Activated CD4-positive, alpha-beta T cell treated with anti-CD3 and anti-CD28 coated beads for 36 hours (primary cell): ENCODE measurements at regions of chr12 and their contacts with region 1.

Region 1: DNA sequence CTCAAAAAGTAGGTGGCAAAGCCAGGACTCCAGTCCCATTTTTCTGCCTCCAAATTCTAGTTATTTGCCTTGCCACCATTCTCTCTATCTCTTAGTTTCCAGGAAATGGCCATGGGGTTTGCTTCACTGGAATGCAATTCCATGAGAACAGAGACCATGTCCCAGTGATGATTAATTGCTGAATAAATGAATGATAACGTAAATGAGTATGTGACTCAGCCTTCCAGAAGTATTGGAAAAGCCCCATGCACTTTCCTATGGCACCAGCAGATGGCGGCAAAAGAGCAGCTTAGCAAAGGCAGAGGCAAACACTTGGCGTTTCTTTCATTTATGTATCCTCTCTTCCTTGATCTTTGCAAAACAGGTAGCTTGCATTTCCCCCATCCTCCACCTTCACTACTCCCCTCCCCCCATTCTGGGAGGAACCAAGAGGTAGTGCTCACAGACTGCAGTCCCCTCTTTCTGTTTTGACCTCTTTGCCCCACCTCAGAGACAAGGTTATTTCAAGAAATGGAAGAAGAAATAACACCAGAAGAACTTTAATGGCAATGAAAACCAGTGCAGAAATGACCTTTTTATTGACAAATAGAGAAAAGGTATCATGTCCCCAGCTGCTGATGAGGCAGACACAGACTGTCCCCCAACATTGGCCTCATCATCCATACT is 21.3 kb downstream of the TBX3 start:
- DNase-seq: peak; percentile 84
- ATAC-seq: peak; percentile 42
- H3K4me3 Mint-ChIP-seq: no peak overlapping the region
- H3K27ac Mint-ChIP-seq: no peak overlapping the region
- H3K4me1 Mint-ChIP-seq: no peaks in the 10 kb centered on the region
- H3K27me3 Mint-ChIP-seq: peaks cover 40% of the 10 kb centered on the region

Region 2: DNA sequence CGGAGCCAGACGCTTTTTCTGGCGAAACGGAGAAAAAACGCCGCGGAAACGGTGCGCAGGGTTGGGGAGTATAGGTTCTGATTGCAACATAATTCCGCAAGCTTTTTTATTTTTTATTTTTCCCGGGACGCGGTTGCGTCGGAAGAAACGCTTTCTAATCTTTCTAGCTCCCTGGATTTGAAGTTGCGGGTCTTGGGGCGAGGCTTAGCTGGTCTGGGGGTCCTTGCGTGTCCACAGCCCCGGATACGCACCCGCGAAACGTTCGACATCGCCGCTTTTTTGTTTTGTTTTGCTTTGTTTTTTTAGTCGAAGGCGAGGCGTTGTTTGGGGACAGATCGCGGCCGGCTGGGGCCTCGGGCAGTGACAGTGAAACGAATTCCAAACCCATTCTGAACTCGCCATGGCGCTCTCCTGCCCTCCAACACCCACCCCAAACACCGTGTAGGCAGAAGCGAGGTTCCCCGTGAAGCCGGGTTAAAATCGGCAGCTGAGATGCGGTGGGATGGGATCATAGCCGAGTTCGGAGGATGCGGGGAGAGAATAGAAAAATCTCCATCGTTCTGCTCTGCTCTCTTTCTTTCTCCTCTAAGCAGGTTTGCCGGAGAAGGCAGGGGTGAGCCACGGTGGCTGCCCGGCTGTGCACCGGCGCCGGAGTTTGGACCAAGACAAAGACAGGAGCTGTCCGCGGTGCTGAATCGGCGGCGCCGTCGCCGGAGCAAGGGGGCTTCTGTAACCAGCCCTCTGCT is 1182.9 kb before region 1 on chr12:
- CTCF ChIA-PET with region 1: no interaction called
- POLR2A ChIA-PET with region 1: no interaction called
- intact Hi-C with region 1: loop called in 1 of 2 experiments (anchors 10 kb)
- DNase-seq: peak; percentile 70
- ATAC-seq: no peak
- H3K4me3 Mint-ChIP-seq: peak overlapping the region; percentile 12
- H3K27ac Mint-ChIP-seq: no peak overlapping the region
- H3K4me1 Mint-ChIP-seq: peaks cover 4% of the 10 kb centered on the region
- H3K27me3 Mint-ChIP-seq: peaks cover 69% of the 10 kb centered on the region

Region 3: DNA sequence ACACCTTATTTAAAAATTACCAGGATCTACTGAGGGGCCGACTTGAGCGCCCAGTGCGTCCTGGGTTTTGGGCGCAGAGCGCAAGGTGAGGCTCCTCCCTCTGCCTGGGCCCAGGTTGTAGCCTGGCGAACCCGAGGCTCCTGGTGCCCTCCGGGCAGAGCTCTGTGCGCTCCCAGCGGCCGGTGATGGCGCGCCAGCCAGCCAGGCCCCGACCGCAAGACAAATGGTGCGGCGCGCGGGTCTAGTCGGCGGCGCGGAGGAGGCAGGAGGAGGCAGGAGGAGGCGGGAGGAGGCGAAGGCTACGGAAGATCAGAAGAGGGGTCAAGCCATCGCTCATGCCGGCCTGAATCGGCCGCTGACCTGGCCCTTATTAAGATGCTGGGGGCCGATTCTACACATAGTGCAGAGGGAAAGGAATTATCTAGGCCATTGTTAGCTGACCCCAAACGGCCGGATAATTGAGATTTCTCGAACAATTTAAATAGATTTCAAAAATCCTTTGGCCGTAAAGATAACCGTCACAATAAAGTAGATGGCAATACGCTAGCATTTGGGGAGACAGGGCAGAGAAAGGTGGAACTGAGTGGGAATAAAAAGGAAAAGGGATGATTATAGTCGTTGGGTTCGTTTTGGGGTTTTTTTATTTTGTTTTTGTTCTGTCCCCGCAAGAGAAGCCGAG is 259.5 kb before region 1 on chr12:
- CTCF ChIA-PET with region 1: no interaction called
- POLR2A ChIA-PET with region 1: no interaction called
- intact Hi-C with region 1: loop called (anchors 2 kb)
- DNase-seq: peak; percentile 32
- ATAC-seq: no peak
- H3K4me3 Mint-ChIP-seq: no peak overlapping the region
- H3K27ac Mint-ChIP-seq: no peak overlapping the region
- H3K4me1 Mint-ChIP-seq: peaks cover 2% of the 10 kb centered on the region
- H3K27me3 Mint-ChIP-seq: peaks cover 83% of the 10 kb centered on the region

Region 4: DNA sequence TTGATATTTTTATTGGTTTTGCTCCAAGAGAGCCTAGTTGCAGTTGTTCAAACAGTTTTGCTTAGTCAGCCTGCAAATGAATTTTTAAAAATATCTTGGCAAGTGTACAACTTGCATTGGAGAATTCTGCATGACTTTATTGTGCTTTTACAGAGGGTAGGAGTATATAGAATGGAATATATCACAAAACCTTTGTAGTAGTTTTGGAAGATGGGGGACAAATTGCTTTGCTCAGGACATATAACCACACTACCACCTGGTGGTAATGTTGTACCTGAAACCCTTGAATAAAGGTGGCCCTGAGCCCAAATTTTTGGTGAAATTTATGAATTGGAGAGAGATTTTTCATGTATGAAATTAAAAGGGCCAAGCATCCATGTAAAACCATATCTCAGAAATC is 969.7 kb after region 1 on chr12:
- CTCF ChIA-PET with region 1: no interaction called
- POLR2A ChIA-PET with region 1: no interaction called
- intact Hi-C with region 1: loop called in 1 of 2 experiments (anchors 2 kb)
- DNase-seq: no peak
- ATAC-seq: no peak
- H3K4me3 Mint-ChIP-seq: no peak overlapping the region
- H3K27ac Mint-ChIP-seq: no peak overlapping the region
- H3K4me1 Mint-ChIP-seq: no peaks in the 10 kb centered on the region
- H3K27me3 Mint-ChIP-seq: peaks cover 7% of the 10 kb centered on the region

Region 5: DNA sequence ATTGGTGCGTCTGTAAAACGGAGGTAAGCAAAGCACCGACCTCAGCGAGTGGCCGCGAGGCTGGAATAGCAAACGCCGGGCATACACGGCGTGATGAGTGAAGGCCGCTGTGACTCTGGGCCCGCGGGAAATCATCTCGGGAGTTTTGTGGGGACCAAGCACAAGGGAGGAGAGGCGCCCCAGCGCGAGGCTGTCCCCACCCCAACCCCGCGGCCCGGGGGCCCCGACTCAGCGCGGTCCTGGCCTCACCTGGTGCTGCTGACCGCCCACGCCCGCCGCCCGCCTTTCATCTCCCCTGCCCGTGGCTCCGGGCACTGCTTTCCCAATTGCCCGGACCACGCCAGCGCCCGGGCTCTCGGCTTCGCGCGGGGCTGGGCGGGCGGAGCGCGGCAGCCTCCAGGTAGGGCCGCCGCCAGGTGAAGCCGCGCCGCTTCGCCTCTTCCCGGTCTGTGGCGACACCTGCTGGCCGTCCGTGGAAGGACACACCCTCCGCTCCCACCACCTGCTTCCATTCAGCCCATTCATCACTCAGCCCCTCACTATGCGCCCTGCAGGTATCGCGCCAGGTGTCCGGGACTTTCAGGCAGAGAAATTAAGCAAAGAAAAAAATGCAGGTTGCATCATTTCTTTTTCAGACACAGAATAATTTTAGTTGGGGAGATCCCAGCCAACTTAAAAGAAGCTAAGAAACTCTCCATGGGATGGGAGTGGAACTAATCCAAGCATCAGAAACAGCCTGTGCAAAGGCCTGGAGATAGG is 1254.4 kb after region 1 on chr12:
- CTCF ChIA-PET with region 1: interaction called, 3 read pairs
- POLR2A ChIA-PET with region 1: no interaction called
- intact Hi-C with region 1: loop called (anchors 1 kb)
- DNase-seq: peak; percentile 83
- ATAC-seq: peak; percentile 85
- H3K4me3 Mint-ChIP-seq: peak overlapping the region; percentile 36
- H3K27ac Mint-ChIP-seq: no peak overlapping the region
- H3K4me1 Mint-ChIP-seq: peaks cover 3% of the 10 kb centered on the region
- H3K27me3 Mint-ChIP-seq: peaks cover 56% of the 10 kb centered on the region